ENCODE measurements at regions of chr21 and their contacts with region 1.

Region 1: GRCh38 chr21:34034369-34035014 is 38.9 kb upstream of the MRPS6 start:
- DNase-seq: no peak
- CTCF ChIP-seq: no peak

Region 2: DNA sequence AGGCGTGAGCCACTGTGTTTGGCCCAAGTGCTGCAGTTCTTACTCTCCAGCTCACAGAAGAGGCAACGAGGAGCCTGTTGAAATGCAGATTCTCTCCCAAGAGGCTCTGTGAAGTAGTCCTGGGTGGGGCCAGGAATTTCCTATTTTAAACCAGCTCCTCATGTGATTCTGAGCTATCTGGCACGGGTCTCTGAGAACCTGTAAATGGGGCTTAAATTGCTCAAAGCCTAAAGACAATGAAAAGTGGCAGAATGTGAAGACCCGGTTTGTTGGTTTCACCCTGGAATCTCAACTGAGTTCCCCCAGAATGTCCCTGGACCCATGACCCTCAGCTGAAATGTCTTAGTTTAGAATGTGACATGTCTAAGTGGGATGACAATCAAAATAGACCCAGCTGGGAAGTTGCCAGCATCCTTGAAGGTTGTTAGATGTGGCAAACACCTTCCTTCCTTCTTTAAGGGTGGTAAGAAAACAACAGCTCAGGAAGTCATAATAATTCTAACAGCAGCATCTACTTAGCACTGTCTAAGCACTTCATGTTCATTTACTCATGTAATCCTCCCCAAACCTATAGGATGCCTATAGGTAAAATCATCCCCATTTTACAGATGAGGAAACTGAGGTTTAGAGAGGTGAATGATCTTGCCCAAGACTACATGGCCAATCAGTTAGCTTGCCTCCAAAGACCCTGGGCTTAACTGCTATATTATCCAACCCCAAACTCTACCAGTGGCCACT is 98.0 kb before region 1 on chr21:
- CTCF ChIA-PET with region 1: no interaction called
- POLR2A ChIA-PET with region 1: no interaction called
- DNase-seq: no peak
- CTCF ChIP-seq: no peak

Region 3: GRCh38 chr21:34020005-34020847 is 14.3 kb before region 1 on chr21:
- CTCF ChIA-PET with region 1: interaction called, 10 read pairs
- POLR2A ChIA-PET with region 1: no interaction called
- DNase-seq: peak; percentile 25
- CTCF ChIP-seq: peak; percentile 9